ENCODE measurements at regions of chr3 and their contacts with region 1.

Region 1: GRCh38 chr3:127697551-127698240 is 24.9 kb downstream of the ABTB1 start:
- DNase-seq: peak; percentile 95
- H3K4me3 ChIP-seq: peak overlapping the region; percentile 33 to 43 (median 38)
- H3K27ac ChIP-seq: peak overlapping the region; percentile 84 to 95 (median 92)
- H3K4me1 ChIP-seq: peaks cover 66 to 69% (median 68%) of the 10 kb centered on the region in 4 donors
- H3K27me3 ChIP-seq: no peaks in the 10 kb centered on the region
- CTCF ChIP-seq: no peak
- EP300 ChIP-seq: no peak
- POLR2A ChIP-seq: no peak

Region 2: GRCh38 chr3:127762077-127762786 is 64.5 kb after region 1 on chr3:
- intact Hi-C with region 1: loop called (anchors 10 kb)
- DNase-seq: no peak
- H3K4me3 ChIP-seq: peak overlapping the region in 3 of 4 donors; percentile 10 to 19 (median 12)
- H3K27ac ChIP-seq: peak overlapping the region; percentile 62 to 78 (median 70)
- H3K4me1 ChIP-seq: peaks cover 46 to 59% (median 55%) of the 10 kb centered on the region in 4 donors
- H3K27me3 ChIP-seq: no peaks in the 10 kb centered on the region
- CTCF ChIP-seq: no peak
- EP300 ChIP-seq: no peak
- POLR2A ChIP-seq: no peak

Region 3: DNA sequence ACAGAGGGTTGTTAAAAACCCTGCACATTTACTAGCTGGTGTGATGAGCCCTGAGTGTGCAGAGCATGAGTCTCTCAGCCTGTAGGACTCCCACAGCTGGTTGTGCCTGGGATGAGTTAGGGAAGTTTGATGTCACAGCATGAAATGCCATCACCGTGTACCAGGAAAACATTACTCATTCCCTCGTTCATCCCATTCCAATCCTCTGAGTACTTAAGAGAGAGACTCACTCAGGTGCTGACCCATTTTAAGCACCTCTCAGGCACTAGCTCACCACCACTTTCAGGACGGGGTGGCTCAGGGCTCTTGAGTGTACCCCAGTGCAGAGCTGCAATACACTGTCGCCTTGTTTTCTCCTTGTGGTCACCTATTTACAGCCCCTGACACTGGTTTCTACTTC is 105.9 kb after region 1 on chr3:
- intact Hi-C with region 1: no loop called
- DNase-seq: no peak
- H3K4me3 ChIP-seq: no peak overlapping the region
- H3K27ac ChIP-seq: peak overlapping the region in 2 of 4 donors; percentile 5 to 33
- H3K4me1 ChIP-seq: peaks cover 23 to 50% (median 45%) of the 10 kb centered on the region in 4 donors
- H3K27me3 ChIP-seq: no peaks in the 10 kb centered on the region
- CTCF ChIP-seq: no peak
- EP300 ChIP-seq: no peak
- POLR2A ChIP-seq: no peak

Region 4: GRCh38 chr3:127822698-127823425 is 125.2 kb after region 1 on chr3:
- intact Hi-C with region 1: loop called (anchors 5 kb)
- DNase-seq: no peak
- H3K4me3 ChIP-seq: peak overlapping the region; percentile 89 to 96 (median 94)
- H3K27ac ChIP-seq: peak overlapping the region; percentile 86 to 92 (median 86)
- H3K4me1 ChIP-seq: peaks cover 30 to 55% (median 46%) of the 10 kb centered on the region in 4 donors
- H3K27me3 ChIP-seq: no peaks in the 10 kb centered on the region
- CTCF ChIP-seq: peak in 1 of 3 experiments; percentile 80
- EP300 ChIP-seq: no peak
- POLR2A ChIP-seq: peak; percentile 16

Measured in esophagus muscularis mucosa (tissue), 4 donors.